H1 (cell line): ENCODE measurements at regions of chr4 and their contacts with region 1.

Region 1: DNA sequence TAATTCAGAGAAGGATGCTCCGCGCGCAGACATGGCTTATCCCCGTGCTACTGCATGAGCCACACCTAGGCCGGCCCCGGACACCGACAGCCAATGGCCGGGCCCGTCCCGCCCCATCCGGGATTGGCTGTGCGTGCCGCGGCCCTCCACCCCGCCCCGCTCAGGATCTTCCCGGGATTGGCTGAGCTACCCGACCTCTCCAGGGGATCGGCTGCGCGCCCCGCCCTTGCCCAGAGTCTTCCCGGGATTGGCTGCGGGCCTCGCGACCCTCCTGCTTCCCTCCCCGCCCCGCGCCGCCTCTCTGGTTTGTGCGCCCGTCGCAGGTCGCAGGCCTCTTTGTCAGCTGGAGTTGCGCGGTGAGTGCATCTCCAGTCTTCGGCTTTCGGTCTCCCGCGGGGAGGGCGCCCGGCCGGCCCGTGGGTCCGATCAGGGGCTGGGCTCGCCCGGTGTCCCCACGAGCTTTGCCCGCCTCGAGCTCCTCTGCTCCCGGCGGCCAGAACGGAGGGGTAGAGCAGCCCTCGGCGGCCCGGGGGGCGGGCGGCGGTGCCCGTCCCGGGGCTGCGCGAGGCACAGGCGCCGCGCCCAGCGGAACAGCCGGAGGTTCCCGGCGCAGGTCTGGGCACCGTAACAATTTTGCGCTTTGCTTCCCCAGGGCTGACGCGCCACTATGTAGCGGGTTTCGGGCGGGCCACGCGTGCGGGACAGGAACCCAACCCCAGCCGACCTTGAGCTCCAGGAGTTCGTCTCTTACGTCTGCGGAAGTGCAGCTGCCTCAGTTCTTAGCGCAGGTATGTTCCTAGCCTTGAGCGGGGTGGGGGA is 38.8 kb downstream of the ERVMER34-1 start:
- DNase-seq: peak; percentile 92 to 98
- H3K4me3 ChIP-seq: peak overlapping the region; percentile 87 to 96 (median 92)
- H3K27ac ChIP-seq: peak overlapping the region; percentile 94
- H3K4me1 ChIP-seq: peaks cover 3 to 15% (median 10%) of the 10 kb centered on the region in 4 experiments; a peak in 6 of 7 replicates
- H3K27me3 ChIP-seq: no peaks in the 10 kb centered on the region
- CTCF ChIP-seq: no peak
- EP300 ChIP-seq: no peak
- POLR2A ChIP-seq: peak; percentile 92 to 93
- RAD21 ChIP-seq: no peak

Region 2: GRCh38 chr4:52659001-52659721 is 53.2 kb before region 1 on chr4 and contains the start of gene USP46:
- CTCF ChIA-PET with region 1: no interaction called
- POLR2A ChIA-PET with region 1: interaction called, 55 read pairs
- DNase-seq: peak in 1 of 2 experiments; percentile 74
- H3K4me3 ChIP-seq: peak within 1 kb of the TSS; percentile 73 to 98 (median 87)
- H3K27ac ChIP-seq: peak within 1 kb of the TSS; percentile 72; the same call in 1 of the 2 replicates
- H3K4me1 ChIP-seq: peaks cover 0 to 15% (median 9%) of the 10 kb centered on the region in 4 experiments; a peak in 6 of 7 replicates
- H3K27me3 ChIP-seq: peaks cover 0 to 5% (median 2%) of the 10 kb centered on the region in 4 experiments; a peak in 4 of 7 replicates
- CTCF ChIP-seq: no peak
- EP300 ChIP-seq: no peak
- POLR2A ChIP-seq: peak; percentile 44 to 51
- RAD21 ChIP-seq: no peak
- total RNA-seq, gene USP46: 53.4 and 62.4 TPM in 2 replicates

Region 3: DNA sequence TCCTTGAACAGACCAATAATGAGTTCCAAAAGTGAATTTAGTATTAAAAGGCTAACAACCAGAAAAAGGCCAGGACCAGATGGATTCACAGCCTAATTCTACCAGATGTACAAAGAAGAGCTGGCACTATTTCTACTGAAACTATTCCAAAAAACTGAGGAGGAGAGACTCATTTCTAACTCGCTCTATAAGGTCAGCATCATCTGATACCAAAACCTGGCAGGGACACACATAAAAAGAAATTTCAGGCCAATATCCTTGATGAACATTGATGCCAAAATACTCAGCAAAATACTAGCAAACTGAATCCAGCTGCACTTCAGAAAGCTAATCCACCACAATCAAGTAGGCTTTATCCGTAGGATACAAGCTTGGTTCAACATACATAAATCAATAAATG is 17.4 kb before region 1 on chr4:
- CTCF ChIA-PET with region 1: no interaction called
- POLR2A ChIA-PET with region 1: interaction called, 13 read pairs
- DNase-seq: no peak
- H3K4me3 ChIP-seq: no peak overlapping the region
- H3K27ac ChIP-seq: no peak overlapping the region
- H3K4me1 ChIP-seq: peaks cover 0 to 7% (median 1%) of the 10 kb centered on the region in 4 experiments; a peak in 3 of 7 replicates
- H3K27me3 ChIP-seq: no peaks in the 10 kb centered on the region
- CTCF ChIP-seq: no peak
- EP300 ChIP-seq: no peak
- POLR2A ChIP-seq: no peak
- RAD21 ChIP-seq: no peak

Region 4: GRCh38 chr4:52728691-52729240 is 16.4 kb after region 1 on chr4:
- CTCF ChIA-PET with region 1: interaction called, 3 read pairs
- POLR2A ChIA-PET with region 1: interaction called, 99 read pairs
- DNase-seq: no peak
- H3K4me3 ChIP-seq: no peak overlapping the region
- H3K27ac ChIP-seq: no peak overlapping the region
- H3K4me1 ChIP-seq: peaks cover 0 to 4% (median 0%) of the 10 kb centered on the region in 4 experiments; a peak in 1 of 7 replicates
- H3K27me3 ChIP-seq: no peaks in the 10 kb centered on the region
- CTCF ChIP-seq: no peak
- EP300 ChIP-seq: no peak
- POLR2A ChIP-seq: no peak
- RAD21 ChIP-seq: no peak

Region 5: DNA sequence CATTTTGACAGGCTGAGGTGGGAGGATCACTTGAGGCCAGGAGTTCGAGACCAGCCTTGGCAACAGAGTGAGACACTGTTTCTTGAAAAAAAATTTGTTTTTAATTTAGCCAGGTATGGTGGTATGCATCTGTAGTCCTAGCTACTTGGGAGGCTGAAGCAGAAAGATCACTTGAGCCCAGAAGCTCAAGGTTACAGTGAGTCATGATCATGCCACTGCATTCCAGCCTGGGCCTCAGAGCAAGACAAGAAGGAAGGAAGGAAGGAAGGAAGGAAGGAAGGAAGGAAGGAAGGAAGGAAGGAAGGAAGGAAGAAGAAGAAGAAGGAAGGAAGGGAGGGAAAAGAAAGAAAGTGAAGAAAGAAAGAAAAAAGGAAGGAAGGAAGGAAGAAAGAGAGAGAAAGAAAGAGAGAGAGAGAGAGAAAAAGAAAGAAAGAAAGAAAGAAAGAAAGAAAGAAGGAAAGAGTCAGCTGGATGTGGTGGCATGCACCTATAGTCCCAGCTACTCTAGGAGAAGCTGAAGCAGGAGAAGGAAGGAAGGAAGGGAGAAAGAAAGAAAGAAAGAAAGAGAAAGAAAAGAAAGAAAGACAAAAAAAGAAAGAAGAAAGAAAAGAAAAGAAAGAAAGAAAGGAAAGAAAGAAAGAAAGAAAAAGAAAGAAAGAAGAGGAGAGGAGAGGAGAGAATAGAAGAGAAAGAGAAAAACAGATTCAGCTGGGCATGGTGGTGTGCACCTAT is 83.0 kb after region 1 on chr4:
- CTCF ChIA-PET with region 1: no interaction called
- POLR2A ChIA-PET with region 1: no interaction called
- DNase-seq: no peak
- H3K4me3 ChIP-seq: no peak overlapping the region
- H3K27ac ChIP-seq: no peak overlapping the region
- H3K4me1 ChIP-seq: peaks cover 0 to 2% (median 1%) of the 10 kb centered on the region in 4 experiments; a peak in 2 of 7 replicates
- H3K27me3 ChIP-seq: no peaks in the 10 kb centered on the region
- CTCF ChIP-seq: no peak
- EP300 ChIP-seq: no peak
- POLR2A ChIP-seq: no peak
- RAD21 ChIP-seq: no peak

Region 6: DNA sequence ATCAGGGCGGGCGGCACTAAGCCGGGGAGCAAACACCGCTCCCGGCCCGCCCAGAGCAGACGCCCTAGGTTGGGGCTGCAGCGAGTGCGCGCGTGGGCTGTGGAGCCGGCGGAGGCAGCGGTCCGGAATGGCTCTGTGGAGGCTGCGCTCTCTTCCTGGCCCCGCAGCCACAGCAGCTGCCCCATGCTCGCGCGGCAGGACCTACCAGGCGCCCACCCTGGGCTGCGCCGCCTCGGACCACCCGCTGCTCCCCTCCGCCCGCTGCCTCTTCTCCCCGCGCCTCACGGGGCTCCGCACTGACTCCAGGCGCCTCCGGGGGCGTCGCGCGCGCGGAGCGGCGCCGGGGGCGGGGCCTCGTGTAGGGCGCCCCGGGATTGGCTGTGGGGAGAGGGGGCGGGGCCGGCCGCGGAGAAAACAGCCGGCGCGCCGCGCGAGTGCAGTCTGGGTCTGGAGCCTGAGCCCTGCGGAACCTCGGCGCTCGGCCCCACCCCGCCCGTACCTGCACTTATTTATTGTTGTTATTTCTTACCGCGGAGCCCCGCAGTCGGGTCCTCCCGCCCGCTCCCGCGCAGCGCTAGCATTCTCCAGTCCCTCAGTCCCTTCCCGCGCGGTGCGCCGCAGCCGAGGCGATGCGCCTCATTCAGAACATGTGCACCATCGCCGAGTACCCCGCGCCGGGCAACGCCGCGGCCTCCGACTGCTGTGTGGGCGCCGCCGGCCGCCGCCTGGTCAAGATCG is 149.7 kb after region 1 on chr4 and contains the start of gene RASL11B:
- CTCF ChIA-PET with region 1: interaction called, 4 read pairs
- POLR2A ChIA-PET with region 1: interaction called, 45 read pairs
- DNase-seq: peak in 1 of 2 experiments; percentile 92
- H3K4me3 ChIP-seq: peak within 1 kb of the TSS; percentile 79 to 97 (median 88)
- H3K27ac ChIP-seq: peak within 1 kb of the TSS; percentile 83
- H3K4me1 ChIP-seq: peaks cover 10 to 31% (median 11%) of the 10 kb centered on the region in 4 experiments
- H3K27me3 ChIP-seq: no peaks in the 10 kb centered on the region; a peak in 1 of 7 replicates
- CTCF ChIP-seq: peak in 1 of 3 experiments; percentile 2; a peak in 1 of 4 replicates
- EP300 ChIP-seq: no peak
- POLR2A ChIP-seq: peak; percentile 91 to 92
- RAD21 ChIP-seq: peak in 1 of 2 experiments; percentile 38; a peak in 2 of 4 replicates
- total RNA-seq, gene RASL11B: 71.4 and 75.5 TPM in 2 replicates

Region 7: DNA sequence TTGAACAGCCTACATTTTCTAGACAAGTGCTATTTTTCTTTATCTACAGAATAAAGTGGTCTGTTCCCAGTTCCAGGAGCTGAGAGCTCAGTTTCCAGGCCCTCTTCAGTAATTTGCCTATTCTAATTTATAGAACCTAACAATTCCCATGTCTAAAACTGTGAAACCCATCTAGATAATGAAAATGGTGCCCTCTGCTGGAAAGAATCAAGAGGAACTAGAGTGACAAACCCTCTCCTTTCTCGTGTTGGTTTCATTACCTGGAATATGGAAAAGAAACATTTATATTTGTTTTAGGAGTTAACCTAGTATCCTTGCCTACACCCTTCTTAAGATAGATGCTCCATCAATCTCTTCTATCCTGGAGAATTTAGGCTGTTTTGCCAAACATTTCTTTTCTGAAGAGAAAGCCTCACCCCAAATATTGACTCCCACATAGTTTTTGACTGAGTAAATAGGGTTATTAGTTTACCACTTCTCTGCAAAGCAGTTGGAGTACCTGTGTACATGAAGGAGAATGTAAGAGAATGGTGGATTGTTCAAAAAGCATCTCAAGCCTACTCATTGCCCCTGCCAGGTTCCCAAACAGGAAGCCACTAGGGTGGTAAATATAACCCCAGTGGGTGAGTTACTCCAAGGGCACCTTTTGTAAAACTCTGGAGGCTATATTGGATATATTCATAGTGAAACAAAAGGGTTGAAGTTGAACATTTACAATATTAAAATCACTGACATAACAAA is 271.4 kb after region 1 on chr4:
- CTCF ChIA-PET with region 1: interaction called, 10 read pairs
- POLR2A ChIA-PET with region 1: interaction called, 8 read pairs
- DNase-seq: no peak
- H3K4me3 ChIP-seq: no peak overlapping the region
- H3K27ac ChIP-seq: no peak overlapping the region
- H3K4me1 ChIP-seq: no peaks in the 10 kb centered on the region; a peak in 1 of 7 replicates
- H3K27me3 ChIP-seq: no peaks in the 10 kb centered on the region
- CTCF ChIP-seq: peak in 2 of 3 experiments; percentile 45 to 52; a peak in 2 of 4 replicates
- EP300 ChIP-seq: no peak
- POLR2A ChIP-seq: no peak
- RAD21 ChIP-seq: peak; percentile 76 to 78

Region 8: GRCh38 chr4:52993771-52994170 is 281.4 kb after region 1 on chr4:
- CTCF ChIA-PET with region 1: no interaction called
- POLR2A ChIA-PET with region 1: no interaction called
- DNase-seq: no peak
- H3K4me3 ChIP-seq: no peak overlapping the region
- H3K27ac ChIP-seq: no peak overlapping the region
- H3K4me1 ChIP-seq: no peaks in the 10 kb centered on the region
- H3K27me3 ChIP-seq: no peaks in the 10 kb centered on the region
- CTCF ChIP-seq: no peak
- EP300 ChIP-seq: no peak
- POLR2A ChIP-seq: no peak
- RAD21 ChIP-seq: no peak

Region 9: GRCh38 chr4:53039741-53040458 is 327.5 kb after region 1 on chr4:
- CTCF ChIA-PET with region 1: no interaction called
- POLR2A ChIA-PET with region 1: no interaction called
- DNase-seq: no peak
- H3K4me3 ChIP-seq: no peak overlapping the region
- H3K27ac ChIP-seq: no peak overlapping the region
- H3K4me1 ChIP-seq: no peaks in the 10 kb centered on the region
- H3K27me3 ChIP-seq: no peaks in the 10 kb centered on the region
- CTCF ChIP-seq: no peak
- EP300 ChIP-seq: no peak
- POLR2A ChIP-seq: no peak
- RAD21 ChIP-seq: no peak